Left cardiac atrium (tissue), 4 donors: ENCODE measurements at regions of chr9 and their contacts with region 1.

Region 1: DNA sequence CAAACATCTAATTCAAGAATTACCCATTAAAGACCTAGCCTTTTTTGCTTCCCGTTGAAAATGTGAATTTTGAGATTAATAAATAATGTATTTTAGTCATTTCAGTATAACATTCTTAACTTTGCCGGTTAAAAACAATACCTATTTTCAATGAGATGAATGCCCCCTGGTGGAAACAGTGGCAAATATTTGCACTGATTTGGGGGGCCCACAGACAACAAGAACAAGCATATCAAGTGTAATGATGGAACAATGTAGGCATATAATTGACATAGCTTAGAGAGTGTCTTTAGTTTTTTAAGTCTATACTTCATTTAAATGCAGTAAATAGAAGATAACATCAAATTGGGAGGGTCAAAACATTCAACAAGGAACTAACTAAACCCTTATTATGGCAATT is 111.9 kb downstream of the NTRK2 start:
- DNase-seq: no peak
- ATAC-seq: no peak

Region 2: DNA sequence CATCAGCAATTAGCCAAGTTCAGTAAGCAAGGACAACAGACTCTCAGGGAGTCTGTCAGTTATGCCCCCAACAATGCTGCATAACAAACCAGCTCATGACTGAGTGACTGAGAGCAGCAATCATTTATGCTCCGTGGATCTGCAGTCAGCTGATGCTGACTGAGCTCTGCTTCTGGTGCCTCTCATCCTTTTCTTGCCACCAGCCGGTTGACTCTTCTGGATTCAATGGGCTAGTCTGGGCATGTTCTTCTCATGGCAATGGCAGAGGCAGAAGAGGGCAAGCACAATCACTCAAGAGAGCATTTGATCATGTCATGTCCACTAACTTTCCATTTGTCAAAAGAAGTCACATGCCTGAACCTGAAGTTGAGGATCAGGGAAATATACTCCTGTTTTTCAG is 269.0 kb before region 1 on chr9:
- intact Hi-C with region 1: no loop called
- DNase-seq: no peak
- ATAC-seq: no peak

Region 3: GRCh38 chr9:84642553-84643141 is 138.8 kb before region 1 on chr9:
- intact Hi-C with region 1: no loop called
- DNase-seq: no peak
- ATAC-seq: no peak

Region 4: DNA sequence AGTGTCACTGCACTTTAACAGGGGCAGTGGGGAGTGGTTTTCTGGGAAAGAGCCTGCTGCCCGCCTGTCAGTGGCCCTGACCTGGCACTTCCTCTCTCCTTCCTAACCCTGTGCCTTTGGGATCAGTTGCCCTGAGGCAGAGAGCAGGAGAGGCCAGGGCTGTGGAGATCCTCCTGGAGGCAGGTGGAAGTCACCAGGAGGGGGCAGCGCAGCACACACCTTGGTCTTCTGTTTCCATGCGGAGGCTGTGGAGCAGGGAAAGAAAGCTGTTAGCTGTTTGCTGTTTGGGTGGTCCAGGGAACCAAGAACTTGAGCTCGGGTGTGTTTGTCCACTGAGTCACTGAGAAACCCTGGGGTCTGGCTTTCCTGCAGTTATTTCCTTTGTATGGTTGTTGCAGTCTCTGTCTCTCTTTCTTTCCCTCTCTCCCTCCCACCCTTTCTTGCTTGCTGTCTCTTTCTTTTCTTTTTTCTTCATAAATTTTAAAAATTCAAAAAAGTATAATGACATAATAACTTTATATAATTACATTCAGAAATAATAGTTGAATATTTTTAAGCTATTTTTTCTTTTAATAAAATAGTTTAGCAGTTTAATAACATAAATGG is 83.8 kb before region 1 on chr9:
- intact Hi-C with region 1: loop called in 1 of 2 experiments (anchors 5 kb)
- DNase-seq: peak; percentile 76
- ATAC-seq: peak; percentile 70 to 74

Region 5: DNA sequence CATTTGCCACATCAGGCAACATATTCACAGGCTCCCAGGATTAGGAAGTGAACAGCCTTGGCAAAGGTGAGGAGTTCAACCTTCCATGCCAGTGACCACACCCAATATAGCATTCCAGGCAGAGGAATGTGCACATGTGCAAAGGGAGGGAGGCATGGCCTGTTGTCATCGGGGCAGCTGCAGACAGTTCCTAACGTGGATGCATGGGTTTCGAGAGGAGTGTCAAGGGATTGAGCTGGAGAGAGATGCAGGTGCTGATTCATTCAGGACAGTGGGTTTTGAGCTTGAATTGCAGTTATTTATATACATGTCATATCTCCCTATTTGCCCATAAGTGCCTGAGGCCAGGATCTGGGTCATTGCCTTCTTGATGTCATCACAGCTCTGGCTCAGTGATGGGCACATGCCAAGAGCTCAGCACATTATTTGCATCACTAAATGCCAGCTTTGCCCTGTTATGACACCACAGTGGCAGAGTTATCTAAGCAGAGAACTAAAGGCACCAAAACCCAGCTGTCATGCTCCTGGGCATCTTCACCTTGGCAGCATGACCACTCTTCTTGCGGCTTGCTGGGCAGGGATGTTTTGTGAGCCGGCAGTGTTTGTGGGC is 166.0 kb after region 1 on chr9:
- intact Hi-C with region 1: loop called in 1 of 2 experiments (anchors 10 kb)
- DNase-seq: peak; percentile 62
- ATAC-seq: peak; percentile 57 to 79

Region 6: GRCh38 chr9:85137696-85138095 is 356.2 kb after region 1 on chr9:
- intact Hi-C with region 1: no loop called
- DNase-seq: no peak
- ATAC-seq: no peak

Region 7: DNA sequence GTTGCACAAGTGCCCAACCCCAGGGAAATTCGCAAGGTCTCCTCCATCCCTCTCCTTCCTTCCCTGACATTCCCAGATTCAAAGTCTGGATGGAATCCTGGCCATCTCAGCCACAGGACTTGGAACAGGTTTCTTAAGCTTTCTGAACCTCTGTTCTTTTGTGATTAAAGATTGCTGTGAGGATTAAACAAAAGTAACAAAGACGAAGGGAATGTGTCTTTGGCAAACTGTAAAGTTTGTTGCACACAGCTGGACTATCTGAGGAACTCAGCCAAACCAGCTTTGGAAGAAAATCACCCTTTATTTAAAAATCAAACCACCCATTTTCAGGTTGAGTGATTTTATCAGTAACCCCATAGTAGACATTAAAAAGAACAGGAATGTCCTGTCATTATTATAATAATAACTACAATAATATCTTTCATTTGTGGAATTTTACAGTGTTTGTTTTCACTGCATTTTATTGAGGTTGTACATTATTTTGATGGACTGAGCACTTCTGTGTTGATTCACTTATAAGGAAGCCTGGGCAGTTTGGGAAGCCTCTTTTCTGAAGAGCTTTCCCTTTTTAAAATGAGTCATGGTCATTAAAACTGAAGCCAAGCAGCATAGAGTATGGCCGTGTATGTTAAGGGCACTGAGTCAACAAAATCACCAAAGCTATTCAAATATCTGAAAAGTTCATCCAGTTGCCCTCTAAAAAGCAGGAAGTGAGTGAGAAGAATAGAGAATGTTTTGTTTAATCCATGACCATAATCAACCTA is 650.1 kb after region 1 on chr9:
- intact Hi-C with region 1: no loop called
- DNase-seq: no peak
- ATAC-seq: no peak